ENCODE measurements at regions of chr1 and their contacts with region 1.

Region 1: GRCh38 chr1:165768513-165769394 is at the start of gene TMCO1:
- DNase-seq: peak; percentile 100

Region 2: DNA sequence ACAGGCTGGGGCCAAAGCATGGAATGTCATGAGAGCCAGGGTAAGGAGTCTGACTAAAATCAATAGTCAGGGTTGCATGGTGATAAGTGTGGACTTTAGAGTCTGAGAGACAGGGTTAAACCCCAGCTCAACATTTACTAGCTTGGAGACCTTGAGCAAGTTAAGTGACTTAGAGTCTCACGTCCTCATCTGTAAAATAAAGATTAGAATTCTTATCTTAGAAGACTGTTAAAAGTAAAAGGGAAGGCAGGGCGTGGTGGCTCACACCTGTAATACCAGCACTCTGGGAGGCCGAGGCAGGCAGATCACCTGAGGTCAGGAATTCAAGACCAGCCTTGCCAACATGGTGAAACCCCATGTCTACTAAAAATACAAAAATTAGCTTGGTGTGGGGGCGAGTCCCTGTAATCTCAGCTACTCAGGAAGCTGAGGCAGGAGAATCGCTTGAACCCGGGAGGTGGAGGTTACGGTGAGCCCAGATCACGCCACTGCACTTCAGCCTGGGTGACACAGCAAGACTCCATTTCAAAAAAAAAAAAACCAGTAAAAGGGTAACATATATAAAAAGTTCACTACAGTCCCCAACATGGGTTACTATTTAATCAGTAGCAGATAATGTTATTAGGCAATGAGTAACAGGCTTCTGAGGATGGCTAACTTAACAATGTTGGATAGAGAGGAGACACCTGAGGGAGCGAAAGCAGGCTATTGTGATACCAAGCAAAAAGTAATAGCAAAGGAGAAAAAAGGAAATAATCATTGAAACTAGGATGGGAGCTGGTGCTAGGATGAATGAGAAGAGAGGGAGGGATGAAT is 20.9 kb before region 1 on chr1:
- CTCF ChIA-PET with region 1: no interaction called
- POLR2A ChIA-PET with region 1: no interaction called
- DNase-seq: no peak

Region 3: DNA sequence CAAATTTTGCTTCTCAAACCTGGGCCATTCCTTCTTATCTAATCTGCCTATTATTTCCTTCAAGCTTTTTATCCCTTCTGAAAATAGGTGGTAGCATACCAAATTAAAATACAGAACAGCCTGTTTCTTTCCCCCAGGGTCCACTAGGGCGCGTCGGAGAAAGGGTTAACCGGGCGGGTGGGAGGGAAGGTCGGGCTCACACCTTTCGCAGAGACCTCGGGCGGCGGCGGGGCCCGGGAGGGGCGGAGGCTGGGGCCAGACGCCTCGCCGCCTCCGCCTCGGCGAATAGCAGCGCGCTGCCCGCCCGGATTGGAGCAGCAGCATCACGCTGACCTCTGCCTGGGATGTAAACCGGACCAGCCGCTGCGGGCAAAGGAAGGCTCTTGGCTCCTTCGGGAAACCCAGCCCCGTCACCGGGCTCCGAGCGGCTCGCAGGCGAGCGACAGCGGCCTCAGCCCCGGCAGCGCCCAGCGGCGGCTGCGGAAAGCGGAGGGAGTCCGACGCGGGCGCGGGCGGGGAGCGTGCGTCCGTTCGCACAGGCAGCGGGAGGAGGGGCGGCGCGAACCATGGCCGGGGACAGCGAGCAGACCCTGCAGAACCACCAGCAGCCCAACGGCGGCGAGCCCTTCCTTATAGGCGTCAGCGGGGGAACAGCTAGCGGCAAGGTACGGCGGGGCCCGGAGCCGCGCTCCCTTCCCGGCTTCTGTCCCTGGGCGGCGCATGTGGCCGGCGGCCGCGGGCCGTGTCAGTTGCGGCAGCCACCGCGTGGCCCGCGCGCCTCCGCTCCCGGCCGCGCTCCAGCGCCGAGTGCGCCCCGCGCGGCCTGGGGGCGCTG is 58.7 kb after region 1 on chr1 and contains the start of gene UCK2:
- CTCF ChIA-PET with region 1: no interaction called
- POLR2A ChIA-PET with region 1: interaction called, 32 read pairs
- DNase-seq: peak; percentile 89

Region 4: DNA sequence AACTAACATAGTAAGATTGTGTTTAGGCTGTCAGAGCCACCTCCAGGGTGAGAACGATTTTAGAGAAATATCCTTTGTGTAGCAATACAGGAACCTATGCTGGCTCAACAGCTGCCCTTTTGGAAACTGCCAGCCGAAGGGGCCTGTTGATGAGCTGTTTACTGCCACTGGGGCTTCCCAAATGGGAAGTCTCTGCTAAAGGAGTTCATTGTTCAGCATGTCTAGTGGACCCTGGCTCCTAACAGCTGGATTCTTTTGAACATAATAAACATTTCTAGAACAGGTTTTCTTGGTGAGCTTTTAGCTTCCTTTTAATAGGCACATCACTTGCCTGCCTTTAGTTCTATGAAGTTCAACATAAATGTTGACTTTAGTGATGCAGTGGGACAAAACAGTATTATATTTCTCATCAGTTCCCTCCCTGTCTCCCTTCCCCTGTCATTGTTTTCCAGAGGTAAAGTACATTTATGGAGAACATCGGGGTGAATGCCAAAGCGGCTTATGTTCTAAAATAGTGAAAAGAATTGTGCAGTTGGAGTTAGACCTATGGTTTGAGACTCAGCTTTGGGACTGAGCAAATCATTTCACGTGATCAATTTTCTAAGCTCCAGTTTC is 116.0 kb after region 1 on chr1:
- CTCF ChIA-PET with region 1: no interaction called
- POLR2A ChIA-PET with region 1: interaction called, 14 read pairs
- DNase-seq: no peak